ENCODE measurements at regions of chr6 and their contacts with region 1.

Region 1: DNA sequence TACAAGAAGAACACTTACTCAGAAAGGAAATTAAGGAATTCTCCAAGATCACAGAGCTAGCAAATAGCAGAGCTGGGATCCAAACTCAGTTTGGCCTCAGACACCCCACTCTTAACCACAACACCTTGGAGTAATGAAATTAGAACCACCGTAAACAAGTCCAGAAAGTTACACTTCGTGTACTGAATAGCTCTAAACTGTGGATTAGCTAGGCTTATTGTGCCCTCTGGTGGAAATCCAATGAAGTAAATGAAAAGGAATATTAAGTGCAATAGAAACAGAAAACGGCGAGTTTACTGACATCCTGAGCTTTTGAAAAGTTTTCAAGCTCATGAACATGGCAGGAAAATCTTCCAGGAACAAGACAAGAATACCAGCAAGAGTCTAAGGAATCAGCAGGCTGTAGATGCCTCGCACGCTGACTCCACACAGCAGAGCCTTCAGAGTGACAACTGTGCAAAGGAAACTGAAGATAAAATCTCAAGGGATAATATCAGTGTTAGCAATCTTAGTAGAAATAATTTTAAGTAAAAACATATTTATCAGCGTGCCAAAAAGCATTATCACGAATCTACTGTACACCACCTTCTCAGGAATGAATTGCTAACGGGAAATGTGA is 34.6 kb downstream of the FBXO5 start:
- DNase-seq: peak; percentile 49
- ATAC-seq: peak; percentile 83
- H3K4me3 ChIP-seq: 0 out of 4 replicates have a peak overlapping the region, but pooled peaks of 1 of the 2 experiments have one; percentile 4
- H3K27ac ChIP-seq: no peak overlapping the region
- H3K4me1 ChIP-seq: peaks cover 0 to 13% of the 10 kb centered on the region in 2 experiments; a peak in 2 of 4 replicates
- H3K27me3 ChIP-seq: peaks cover 29% of the 10 kb centered on the region; the same call in 1 of the 2 replicates
- CTCF ChIP-seq: peak; percentile 55 to 80 (median 77)
- POLR2A ChIP-seq: no peak
- RAD21 ChIP-seq: peak; percentile 89

Region 2: DNA sequence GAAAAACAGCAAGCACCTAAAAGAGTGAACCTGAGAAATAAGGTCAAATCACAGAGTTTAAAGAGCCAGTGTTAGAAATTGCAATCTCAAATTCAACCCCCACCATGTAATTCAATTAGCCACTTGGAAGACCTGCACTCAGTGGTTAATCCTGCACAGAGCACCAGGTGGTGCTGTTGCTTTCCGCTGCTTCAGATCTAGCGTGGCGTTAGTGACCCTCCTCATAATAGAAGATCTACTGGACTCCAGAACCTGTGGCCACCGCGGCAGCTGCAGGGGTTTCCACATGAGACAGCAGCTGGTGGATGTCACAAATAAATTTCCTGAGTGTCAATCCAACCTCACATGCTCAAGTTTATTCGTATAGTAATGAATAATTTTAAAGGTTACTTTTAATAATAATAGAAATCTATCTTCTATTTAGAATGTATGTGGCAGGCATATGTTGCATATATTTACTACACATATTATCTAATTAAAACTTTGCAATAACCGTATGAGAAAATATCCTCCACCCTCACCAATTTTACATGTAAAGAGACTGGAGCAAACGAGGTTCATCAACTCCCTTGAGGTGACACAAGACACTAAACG is 395.5 kb before region 1 on chr6:
- CTCF ChIA-PET with region 1: no interaction called
- POLR2A ChIA-PET with region 1: no interaction called
- RAD21 ChIA-PET with region 1: no interaction called
- intact Hi-C with region 1: loop called (anchors 2 kb)
- DNase-seq: peak; percentile 70
- ATAC-seq: peak; percentile 100
- H3K4me3 ChIP-seq: no peak overlapping the region
- H3K27ac ChIP-seq: no peak overlapping the region
- H3K4me1 ChIP-seq: no peaks in the 10 kb centered on the region
- H3K27me3 ChIP-seq: no peaks in the 10 kb centered on the region
- CTCF ChIP-seq: peak; percentile 76 to 88 (median 82); a peak in 5 of 6 replicates
- POLR2A ChIP-seq: no peak
- RAD21 ChIP-seq: peak; percentile 83

Region 3: GRCh38 chr6:152716322-152716721 is 231.9 kb before region 1 on chr6:
- CTCF ChIA-PET with region 1: interaction called, 20 read pairs
- POLR2A ChIA-PET with region 1: no interaction called
- RAD21 ChIA-PET with region 1: no interaction called
- intact Hi-C with region 1: no loop called
- DNase-seq: no peak
- ATAC-seq: no peak
- H3K4me3 ChIP-seq: no peak overlapping the region
- H3K27ac ChIP-seq: no peak overlapping the region
- H3K4me1 ChIP-seq: no peaks in the 10 kb centered on the region
- H3K27me3 ChIP-seq: no peaks in the 10 kb centered on the region
- CTCF ChIP-seq: 0 out of 6 replicates have a peak, but pooled peaks of 2 of the 3 experiments have one; percentile 10 to 15
- POLR2A ChIP-seq: no peak
- RAD21 ChIP-seq: peak; percentile 48

Region 4: DNA sequence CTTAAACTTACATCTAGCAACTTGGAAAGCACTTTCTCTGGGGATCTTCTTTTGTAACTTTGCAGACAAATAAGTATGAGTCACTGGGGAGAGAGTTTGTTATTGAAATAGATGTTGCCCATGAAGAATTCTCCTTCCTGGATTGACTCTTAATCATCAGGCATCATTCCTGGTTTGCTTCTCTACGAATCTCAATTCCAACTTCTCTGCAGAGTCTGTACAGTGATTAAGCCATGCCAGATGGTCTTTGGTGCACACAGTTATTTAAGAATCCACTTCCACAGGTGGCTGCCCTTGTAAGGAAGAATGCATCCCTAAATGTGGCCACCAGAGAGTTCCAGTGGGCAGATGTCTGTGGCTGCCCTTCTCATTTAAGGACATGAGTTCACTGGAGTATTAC is 224.9 kb before region 1 on chr6:
- CTCF ChIA-PET with region 1: interaction called, 25 read pairs
- POLR2A ChIA-PET with region 1: no interaction called
- RAD21 ChIA-PET with region 1: interaction called in 1 of 2 experiments, 5 read pairs
- intact Hi-C with region 1: no loop called
- DNase-seq: no peak
- ATAC-seq: no peak
- H3K4me3 ChIP-seq: no peak overlapping the region
- H3K27ac ChIP-seq: no peak overlapping the region
- H3K4me1 ChIP-seq: no peaks in the 10 kb centered on the region
- H3K27me3 ChIP-seq: no peaks in the 10 kb centered on the region
- CTCF ChIP-seq: no peak
- POLR2A ChIP-seq: no peak
- RAD21 ChIP-seq: no peak

Region 5: GRCh38 chr6:152750694-152751093 is 197.6 kb before region 1 on chr6 and contains the start of gene VIP:
- CTCF ChIA-PET with region 1: interaction called, 103 read pairs
- POLR2A ChIA-PET with region 1: interaction called, 3 read pairs
- RAD21 ChIA-PET with region 1: interaction called in 1 of 2 experiments, 9 read pairs
- intact Hi-C with region 1: loop called (anchors 1 kb)
- DNase-seq: no peak
- ATAC-seq: 0 out of 2 replicates have a peak, but pooled peaks have one; percentile 46
- H3K4me3 ChIP-seq: no peak within 1 kb of the TSS
- H3K27ac ChIP-seq: no peak within 1 kb of the TSS
- H3K4me1 ChIP-seq: no peaks in the 10 kb centered on the region; a peak in 1 of 4 replicates
- H3K27me3 ChIP-seq: peaks cover 41% of the 10 kb centered on the region
- CTCF ChIP-seq: no peak
- POLR2A ChIP-seq: no peak
- RAD21 ChIP-seq: no peak
- total RNA-seq, gene VIP: not detected

Region 6: GRCh38 chr6:152863618-152864326 is 84.5 kb before region 1 on chr6:
- CTCF ChIA-PET with region 1: interaction called, 43 read pairs
- POLR2A ChIA-PET with region 1: no interaction called
- RAD21 ChIA-PET with region 1: interaction called in 1 of 2 experiments, 4 read pairs
- intact Hi-C with region 1: loop called (anchors 1 kb)
- DNase-seq: peak; percentile 65
- ATAC-seq: peak; percentile 98
- H3K4me3 ChIP-seq: no peak overlapping the region
- H3K27ac ChIP-seq: no peak overlapping the region
- H3K4me1 ChIP-seq: no peaks in the 10 kb centered on the region
- H3K27me3 ChIP-seq: peaks cover 42% of the 10 kb centered on the region
- CTCF ChIP-seq: peak; percentile 53 to 75 (median 66)
- POLR2A ChIP-seq: no peak
- RAD21 ChIP-seq: peak; percentile 87

Region 7: DNA sequence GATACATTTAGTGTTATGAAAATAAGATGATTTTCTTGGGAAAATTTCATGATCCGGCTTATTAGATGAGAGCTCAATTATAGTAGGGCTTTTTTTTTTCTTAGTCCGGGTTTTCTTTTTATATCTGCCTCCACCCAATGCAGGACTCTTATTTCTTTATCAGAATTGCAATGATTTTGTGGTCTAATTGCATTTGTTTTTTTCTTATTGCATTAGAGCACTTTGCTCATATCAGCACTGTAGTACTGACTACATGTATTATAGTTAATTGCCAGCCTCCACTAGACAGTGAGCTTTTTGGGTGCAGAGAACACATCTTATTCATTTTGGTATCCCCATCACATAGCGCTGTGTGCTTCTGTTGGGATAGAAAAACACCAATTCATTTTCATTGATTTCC is 15.4 kb before region 1 on chr6:
- CTCF ChIA-PET with region 1: no interaction called
- POLR2A ChIA-PET with region 1: no interaction called
- RAD21 ChIA-PET with region 1: no interaction called
- intact Hi-C with region 1: no loop called
- DNase-seq: no peak
- ATAC-seq: no peak
- H3K4me3 ChIP-seq: no peak overlapping the region
- H3K27ac ChIP-seq: no peak overlapping the region
- H3K4me1 ChIP-seq: no peaks in the 10 kb centered on the region
- H3K27me3 ChIP-seq: peaks cover 39% of the 10 kb centered on the region
- CTCF ChIP-seq: no peak
- POLR2A ChIP-seq: no peak
- RAD21 ChIP-seq: no peak

Measured in HCT116 (cell line).